ENCODE measurements at regions of chr4 and their contacts with region 1.

Region 1: DNA sequence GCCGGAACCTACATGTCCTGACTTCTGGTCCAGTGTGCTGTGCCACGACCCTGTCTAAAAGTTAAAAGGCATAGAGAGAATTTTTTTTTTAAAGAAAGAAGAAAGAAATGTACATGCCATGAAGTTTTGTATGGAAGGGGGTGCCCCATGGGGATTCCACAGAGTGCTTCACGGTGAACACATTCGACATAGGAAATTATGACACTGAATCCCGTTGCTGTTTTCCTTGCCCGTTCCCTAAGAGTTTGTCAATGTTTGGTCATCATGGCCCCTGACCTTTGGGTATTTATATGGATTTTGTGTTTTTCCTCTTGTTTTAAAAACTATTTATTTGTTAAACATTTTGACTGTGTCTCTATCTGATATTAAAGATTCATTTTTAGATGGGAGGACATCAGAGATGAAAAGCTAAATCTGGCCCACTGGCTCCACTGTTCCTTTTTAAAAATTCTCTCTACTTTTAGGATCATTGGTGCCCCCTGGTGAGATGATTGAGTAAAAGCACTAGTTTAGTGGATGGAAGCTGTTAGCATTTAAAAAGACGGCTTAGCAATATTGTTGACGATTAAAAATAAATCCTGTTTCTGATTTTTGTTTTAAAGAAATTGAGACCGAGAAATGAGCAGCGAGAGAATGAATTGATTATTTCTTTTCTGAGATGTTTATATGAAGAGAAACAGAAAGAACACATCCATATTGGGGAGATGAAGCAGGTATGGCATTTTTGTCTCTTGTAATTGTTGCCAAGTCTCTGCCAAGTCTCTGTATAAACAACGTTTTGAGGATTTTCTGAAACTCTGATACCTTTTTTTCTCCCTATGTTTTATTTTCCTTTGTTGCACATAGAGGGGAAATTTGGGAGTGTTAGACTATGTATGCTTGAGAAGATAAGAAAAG is 75.0 kb downstream of the PTTG2 start:
- DNase-seq: no peak
- ATAC-seq: peak; percentile 82

Region 2: GRCh38 chr4:37603070-37603468 is 432.2 kb before region 1 on chr4:
- intact Hi-C with region 1: loop called (anchors 10 kb)
- DNase-seq: peak; percentile 90
- ATAC-seq: peak; percentile 97

Region 3: GRCh38 chr4:37802068-37802666 is 233.1 kb before region 1 on chr4:
- intact Hi-C with region 1: loop called (anchors 5 kb)
- DNase-seq: no peak
- ATAC-seq: peak; percentile 90

Region 4: GRCh38 chr4:37891260-37892159 is 143.7 kb before region 1 on chr4:
- intact Hi-C with region 1: loop called (anchors 10 kb)
- DNase-seq: peak; percentile 50
- ATAC-seq: peak; percentile 35